ENCODE measurements at regions of chr2 and their contacts with region 1.

Region 1: DNA sequence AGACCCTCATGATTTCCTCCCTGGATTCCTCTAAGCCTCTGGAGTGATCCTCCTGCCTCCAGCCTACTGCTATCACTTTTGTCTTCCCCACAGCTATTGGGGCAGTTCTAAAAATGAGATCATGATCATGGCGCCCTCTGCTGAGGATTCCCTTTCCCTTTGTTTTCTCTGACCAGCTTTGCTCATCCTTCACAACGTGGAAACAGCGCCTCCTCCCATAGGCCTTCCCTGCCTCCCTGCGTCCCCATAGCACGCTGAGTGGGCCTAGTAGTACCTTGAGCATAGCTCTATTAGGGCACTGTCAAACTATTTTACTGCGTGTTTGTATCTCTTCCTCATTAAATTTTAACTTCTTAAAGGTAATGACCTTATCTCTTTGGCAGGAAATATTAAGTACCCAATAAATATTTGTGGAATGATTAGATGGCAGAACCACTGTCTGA is 207.0 kb upstream of the FANCL start:
- DNase-seq: peak in 2 of 9 experiments; percentile 16 to 35
- ATAC-seq: no peak
- H3K4me3 ChIP-seq: no peak overlapping the region
- H3K4me3 Mint-ChIP-seq: no peak overlapping the region
- H3K27ac ChIP-seq: no peak overlapping the region
- H3K27ac Mint-ChIP-seq: no peak overlapping the region
- H3K4me1 ChIP-seq: no peaks in the 10 kb centered on the region
- H3K4me1 Mint-ChIP-seq: no peaks in the 10 kb centered on the region
- H3K27me3 ChIP-seq: no peaks in the 10 kb centered on the region
- H3K27me3 Mint-ChIP-seq: peaks cover 5% of the 10 kb centered on the region
- CTCF ChIP-seq: no peak

Region 2: DNA sequence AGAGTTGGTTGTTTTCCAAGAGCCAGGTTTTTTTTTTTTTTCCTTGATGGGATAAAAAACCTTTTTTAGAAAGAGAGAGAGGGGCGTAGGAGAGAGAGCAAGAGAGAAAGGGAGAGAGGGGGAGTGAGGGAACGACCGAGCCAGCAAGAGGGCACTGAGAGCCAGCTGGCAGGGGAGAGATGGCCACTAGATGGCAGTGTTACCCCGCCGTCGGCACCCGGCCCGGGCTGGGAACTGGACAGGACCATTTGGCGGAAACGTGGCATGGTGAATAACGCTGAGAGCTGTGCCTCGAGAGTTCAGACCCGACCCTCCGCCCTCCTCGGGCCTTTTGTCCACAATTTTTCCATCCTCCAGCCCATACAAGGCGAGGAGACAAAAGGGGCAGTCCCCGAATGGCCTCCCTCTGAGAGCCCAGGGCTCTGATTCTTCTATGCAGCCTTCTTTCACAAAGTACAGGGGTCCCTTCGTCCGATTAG is 688.2 kb before region 1 on chr2:
- CTCF ChIA-PET with region 1: no interaction called
- POLR2A ChIA-PET with region 1: no interaction called
- intact Hi-C with region 1: loop called in 1 of 2 experiments (anchors 2 kb)
- DNase-seq: peak; percentile 46 to 87 (median 65)
- ATAC-seq: peak; percentile 46
- H3K4me3 ChIP-seq: no peak overlapping the region
- H3K4me3 Mint-ChIP-seq: no peak overlapping the region
- H3K27ac ChIP-seq: no peak overlapping the region
- H3K27ac Mint-ChIP-seq: no peak overlapping the region
- H3K4me1 ChIP-seq: no peaks in the 10 kb centered on the region
- H3K4me1 Mint-ChIP-seq: peaks cover 4% of the 10 kb centered on the region
- H3K27me3 ChIP-seq: no peaks in the 10 kb centered on the region
- H3K27me3 Mint-ChIP-seq: peaks cover 4% of the 10 kb centered on the region
- CTCF ChIP-seq: peak; percentile 89

Region 3: DNA sequence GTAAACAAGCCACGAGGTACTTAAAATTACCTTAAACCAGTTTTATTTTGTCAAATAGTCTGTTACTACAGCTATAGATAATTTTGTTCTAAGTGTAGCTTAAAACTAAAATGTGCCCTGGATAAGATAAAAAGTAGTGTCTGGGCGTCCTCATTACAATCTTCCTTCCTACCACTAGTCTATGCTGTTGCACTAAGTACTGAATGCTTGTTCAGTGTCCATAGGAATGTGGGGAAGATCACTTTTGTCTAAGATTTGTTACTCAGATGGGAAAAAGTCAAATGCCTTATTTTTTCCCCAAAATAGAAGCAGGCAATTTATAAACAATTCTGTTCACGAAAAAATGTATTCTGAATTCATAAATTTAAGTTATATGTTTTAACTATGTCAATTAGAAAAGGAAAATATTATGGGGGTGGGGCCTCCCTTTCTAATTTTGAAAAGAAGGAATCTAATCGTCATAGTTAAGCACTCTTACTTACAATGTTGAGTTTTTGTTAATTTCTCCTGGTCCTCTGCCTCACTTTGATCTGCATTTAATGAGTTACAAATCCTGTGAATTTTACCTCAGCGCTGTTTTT is 541.8 kb before region 1 on chr2:
- CTCF ChIA-PET with region 1: no interaction called
- POLR2A ChIA-PET with region 1: no interaction called
- intact Hi-C with region 1: loop called in 1 of 2 experiments (anchors 2 kb)
- DNase-seq: peak in 2 of 9 experiments; percentile 36 to 53
- ATAC-seq: no peak
- H3K4me3 ChIP-seq: no peak overlapping the region
- H3K4me3 Mint-ChIP-seq: no peak overlapping the region
- H3K27ac ChIP-seq: no peak overlapping the region
- H3K27ac Mint-ChIP-seq: no peak overlapping the region
- H3K4me1 ChIP-seq: no peaks in the 10 kb centered on the region
- H3K4me1 Mint-ChIP-seq: peaks cover 14% of the 10 kb centered on the region
- H3K27me3 ChIP-seq: no peaks in the 10 kb centered on the region
- H3K27me3 Mint-ChIP-seq: no peaks in the 10 kb centered on the region
- CTCF ChIP-seq: no peak

Region 4: DNA sequence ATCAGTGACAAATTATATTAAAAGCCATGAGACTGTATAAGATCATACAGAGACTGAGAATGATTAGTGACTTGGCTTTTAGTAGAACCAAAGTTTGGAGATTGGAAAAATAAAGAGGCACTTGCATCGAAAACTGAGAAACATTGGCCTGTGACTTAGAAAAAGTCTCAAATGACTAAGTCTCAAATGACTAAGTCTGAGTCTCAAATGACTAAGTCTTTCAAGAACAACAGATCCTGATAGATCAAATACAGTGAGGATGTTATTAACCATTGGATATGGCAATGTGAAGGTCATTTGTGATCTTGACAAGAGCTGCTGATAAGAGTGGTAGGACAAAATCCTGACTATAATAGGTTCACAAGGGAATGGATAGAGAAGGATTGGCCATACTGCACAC is 71.5 kb before region 1 on chr2:
- CTCF ChIA-PET with region 1: no interaction called
- POLR2A ChIA-PET with region 1: no interaction called
- intact Hi-C with region 1: no loop called
- DNase-seq: no peak
- ATAC-seq: no peak
- H3K4me3 ChIP-seq: no peak overlapping the region
- H3K4me3 Mint-ChIP-seq: no peak overlapping the region
- H3K27ac ChIP-seq: no peak overlapping the region
- H3K27ac Mint-ChIP-seq: no peak overlapping the region
- H3K4me1 ChIP-seq: no peaks in the 10 kb centered on the region
- H3K4me1 Mint-ChIP-seq: no peaks in the 10 kb centered on the region
- H3K27me3 ChIP-seq: no peaks in the 10 kb centered on the region
- H3K27me3 Mint-ChIP-seq: no peaks in the 10 kb centered on the region
- CTCF ChIP-seq: no peak